Activated T-helper 2 cell treated with anti-CD3 and anti-CD28 coated beads, Interferon-gamma antibody, Interleukin-2, Interleukin-4, amounts not matched to agents 10 μg/mL and 5 μg/mL and 100 μg/mL, durations not matched to agents 14 hours and 24 hours and 36 hours (primary cell): ENCODE measurements at regions of chr9 and their contacts with region 1.

Region 1: GRCh38 chr9:104968025-104968982 is 40.3 kb upstream of the ABCA1 start:
- DNase-seq: peak; percentile 75
- H3K4me3 Mint-ChIP-seq: peak overlapping the region; percentile 83
- H3K27ac Mint-ChIP-seq: peak overlapping the region; percentile 8
- H3K4me1 Mint-ChIP-seq: peaks cover 10% of the 10 kb centered on the region
- H3K27me3 Mint-ChIP-seq: peaks cover 28% of the 10 kb centered on the region

Region 2: GRCh38 chr9:104927912-104928740 is 40.2 kb before region 1 on chr9 and contains the start of gene ABCA1:
- intact Hi-C with region 1: loop called (anchors 1 kb)
- DNase-seq: peak; percentile 38
- H3K4me3 Mint-ChIP-seq: peak within 1 kb of the TSS; percentile 72
- H3K27ac Mint-ChIP-seq: no peak within 1 kb of the TSS
- H3K4me1 Mint-ChIP-seq: peaks cover 5% of the 10 kb centered on the region
- H3K27me3 Mint-ChIP-seq: peaks cover 54% of the 10 kb centered on the region
- total RNA-seq, gene ABCA1: 0.14 TPM in 1 of 2 replicates, not detected in the other